ENCODE measurements at regions of chr6 and their contacts with region 1.

Region 1: GRCh38 chr6:6918216-6918983 is 189.4 kb upstream of the RREB1 start:
- DNase-seq: peak; percentile 91
- ATAC-seq: peak; percentile 97
- H3K4me3 Mint-ChIP-seq: no peak overlapping the region
- H3K27ac Mint-ChIP-seq: no peak overlapping the region
- H3K4me1 Mint-ChIP-seq: peaks cover 31% of the 10 kb centered on the region
- H3K27me3 Mint-ChIP-seq: peaks cover 32% of the 10 kb centered on the region

Region 2: GRCh38 chr6:6169141-6169540 is 749.3 kb before region 1 on chr6:
- CTCF ChIA-PET with region 1: no interaction called
- POLR2A ChIA-PET with region 1: no interaction called
- intact Hi-C with region 1: no loop called
- DNase-seq: no peak
- ATAC-seq: no peak
- H3K4me3 Mint-ChIP-seq: no peak overlapping the region
- H3K27ac Mint-ChIP-seq: no peak overlapping the region
- H3K4me1 Mint-ChIP-seq: no peaks in the 10 kb centered on the region
- H3K27me3 Mint-ChIP-seq: peaks cover 6% of the 10 kb centered on the region

Region 3: GRCh38 chr6:6515691-6516607 is 402.5 kb before region 1 on chr6:
- CTCF ChIA-PET with region 1: no interaction called
- POLR2A ChIA-PET with region 1: no interaction called
- intact Hi-C with region 1: loop called in 1 of 2 experiments (anchors 5 kb)
- DNase-seq: peak; percentile 84
- ATAC-seq: peak; percentile 90
- H3K4me3 Mint-ChIP-seq: no peak overlapping the region
- H3K27ac Mint-ChIP-seq: no peak overlapping the region
- H3K4me1 Mint-ChIP-seq: peaks cover 18% of the 10 kb centered on the region
- H3K27me3 Mint-ChIP-seq: peaks cover 78% of the 10 kb centered on the region

Region 4: GRCh38 chr6:6811151-6812002 is 107.0 kb before region 1 on chr6:
- CTCF ChIA-PET with region 1: no interaction called
- POLR2A ChIA-PET with region 1: no interaction called
- intact Hi-C with region 1: loop called in 1 of 2 experiments (anchors 5 kb)
- DNase-seq: peak; percentile 49
- ATAC-seq: peak; percentile 80
- H3K4me3 Mint-ChIP-seq: peak overlapping the region; percentile 59
- H3K27ac Mint-ChIP-seq: peak overlapping the region; percentile 16
- H3K4me1 Mint-ChIP-seq: peaks cover 16% of the 10 kb centered on the region
- H3K27me3 Mint-ChIP-seq: peaks cover 4% of the 10 kb centered on the region

Region 5: DNA sequence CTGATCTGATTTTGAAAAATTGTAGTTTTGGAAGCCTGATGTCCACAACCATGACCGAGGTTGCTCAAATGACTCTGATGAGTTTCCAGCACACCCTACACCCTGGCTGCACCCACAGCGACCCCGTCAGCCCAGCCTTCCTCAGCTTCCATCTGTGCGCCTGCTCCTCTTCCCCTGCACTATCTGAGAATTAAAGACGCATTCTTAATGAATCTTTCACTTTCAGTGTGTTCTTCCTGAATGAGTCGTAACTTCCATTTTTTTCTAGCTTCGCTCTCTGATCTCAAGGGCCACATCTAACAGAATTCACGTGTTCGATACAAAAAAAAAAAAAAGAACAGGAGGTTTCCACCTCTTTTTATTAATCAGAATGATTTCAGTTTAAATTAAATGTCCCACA is 168.1 kb after region 1 on chr6:
- CTCF ChIA-PET with region 1: no interaction called
- POLR2A ChIA-PET with region 1: no interaction called
- intact Hi-C with region 1: loop called in 1 of 2 experiments (anchors 1 kb)
- DNase-seq: peak; percentile 56
- ATAC-seq: peak; percentile 59
- H3K4me3 Mint-ChIP-seq: peak overlapping the region; percentile 53
- H3K27ac Mint-ChIP-seq: peak overlapping the region; percentile 26
- H3K4me1 Mint-ChIP-seq: peaks cover 30% of the 10 kb centered on the region
- H3K27me3 Mint-ChIP-seq: peaks cover 6% of the 10 kb centered on the region

Region 6: GRCh38 chr6:7238900-7239589 is 320.6 kb after region 1 on chr6:
- CTCF ChIA-PET with region 1: no interaction called
- POLR2A ChIA-PET with region 1: no interaction called
- intact Hi-C with region 1: loop called (anchors 2 to 10 kb)
- DNase-seq: peak; percentile 92
- ATAC-seq: peak; percentile 92
- H3K4me3 Mint-ChIP-seq: no peak overlapping the region
- H3K27ac Mint-ChIP-seq: no peak overlapping the region
- H3K4me1 Mint-ChIP-seq: peaks cover 23% of the 10 kb centered on the region
- H3K27me3 Mint-ChIP-seq: no peaks in the 10 kb centered on the region

Region 7: GRCh38 chr6:7389451-7390225 is 471.2 kb after region 1 on chr6 and contains the starts of genes CAGE1 and RIOK1:
- CTCF ChIA-PET with region 1: no interaction called
- POLR2A ChIA-PET with region 1: no interaction called
- intact Hi-C with region 1: loop called in 1 of 2 experiments (anchors 1 kb)
- DNase-seq: peak; percentile 97
- ATAC-seq: peak; percentile 96
- H3K4me3 Mint-ChIP-seq: peak within 1 kb of the TSS; percentile 88
- H3K27ac Mint-ChIP-seq: peak within 1 kb of the TSS; percentile 99
- H3K4me1 Mint-ChIP-seq: peaks cover 42% of the 10 kb centered on the region
- H3K27me3 Mint-ChIP-seq: no peaks in the 10 kb centered on the region
- total RNA-seq, gene CAGE1: 0.07 to 0.09 TPM
- total RNA-seq, gene RIOK1: 37.3 to 39.6 TPM

Measured in activated CD4-positive, alpha-beta T cell treated with anti-CD3 and anti-CD28 coated beads for 36 hours (primary cell).